ENCODE measurements at regions of chr3 and their contacts with region 1.

Region 1: DNA sequence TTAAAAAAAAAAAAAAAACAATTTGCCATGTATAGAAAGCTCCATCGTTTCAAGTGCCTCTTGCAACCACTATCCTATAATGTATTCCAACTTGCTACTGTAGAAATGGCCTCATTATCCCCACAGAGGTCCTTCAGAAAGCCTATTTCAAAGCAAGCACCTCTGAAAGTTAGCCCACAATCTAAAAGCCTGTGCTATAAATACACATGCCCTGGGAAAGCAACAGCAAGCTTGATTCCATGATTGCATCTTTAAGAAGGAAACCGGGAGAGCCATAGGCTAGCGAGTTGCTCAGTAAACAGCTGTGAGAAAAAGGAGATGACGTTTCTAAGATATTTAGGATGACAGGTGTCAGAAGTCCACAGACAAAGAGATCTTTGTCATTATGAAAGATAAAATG is 28.3 kb downstream of the TAFA4 start:
- DNase-seq: no peak
- H3K4me3 ChIP-seq: no peak overlapping the region
- H3K27ac ChIP-seq: no peak overlapping the region
- H3K4me1 ChIP-seq: no peaks in the 10 kb centered on the region
- H3K27me3 ChIP-seq: peaks cover 0 to 23% (median 0%) of the 10 kb centered on the region in 4 donors
- CTCF ChIP-seq: no peak
- EP300 ChIP-seq: no peak
- POLR2A ChIP-seq: no peak

Region 2: GRCh38 chr3:66962664-66963063 is 1941.4 kb before region 1 on chr3:
- intact Hi-C with region 1: loop called (anchors 10 kb)
- DNase-seq: no peak
- H3K4me3 ChIP-seq: no peak overlapping the region
- H3K27ac ChIP-seq: no peak overlapping the region
- H3K4me1 ChIP-seq: no peaks in the 10 kb centered on the region
- H3K27me3 ChIP-seq: no peaks in the 10 kb centered on the region
- CTCF ChIP-seq: no peak
- EP300 ChIP-seq: no peak
- POLR2A ChIP-seq: no peak

Region 3: GRCh38 chr3:68479779-68480178 is 424.3 kb before region 1 on chr3:
- intact Hi-C with region 1: no loop called
- DNase-seq: no peak
- H3K4me3 ChIP-seq: no peak overlapping the region
- H3K27ac ChIP-seq: no peak overlapping the region
- H3K4me1 ChIP-seq: peaks cover 0 to 14% (median 4%) of the 10 kb centered on the region in 4 donors
- H3K27me3 ChIP-seq: no peaks in the 10 kb centered on the region
- CTCF ChIP-seq: no peak
- EP300 ChIP-seq: no peak
- POLR2A ChIP-seq: no peak

Region 4: DNA sequence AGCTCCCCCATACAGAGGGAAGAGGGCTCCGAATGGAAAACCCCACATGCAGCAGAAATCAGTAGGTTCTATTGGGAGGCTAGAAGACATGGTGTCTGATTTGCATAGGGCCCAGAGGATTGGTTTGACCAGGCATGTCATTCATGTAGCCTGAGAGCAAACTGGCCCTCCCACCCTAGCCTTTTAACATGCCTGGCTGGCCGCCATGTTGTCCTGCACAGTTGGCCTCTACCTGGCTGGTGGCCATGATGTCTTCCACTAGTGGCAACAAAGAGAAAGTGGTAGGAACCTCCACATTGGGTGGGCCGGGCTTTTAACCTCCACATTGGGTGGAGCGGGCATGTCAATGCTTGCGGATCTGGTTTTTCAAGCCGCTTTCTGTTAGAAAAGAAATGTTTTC is 283.9 kb before region 1 on chr3:
- intact Hi-C with region 1: no loop called
- DNase-seq: no peak
- H3K4me3 ChIP-seq: no peak overlapping the region
- H3K27ac ChIP-seq: no peak overlapping the region
- H3K4me1 ChIP-seq: no peaks in the 10 kb centered on the region
- H3K27me3 ChIP-seq: no peaks in the 10 kb centered on the region
- CTCF ChIP-seq: no peak
- EP300 ChIP-seq: no peak
- POLR2A ChIP-seq: no peak

Region 5: GRCh38 chr3:68809596-68809995 is 94.5 kb before region 1 on chr3:
- intact Hi-C with region 1: no loop called
- DNase-seq: no peak
- H3K4me3 ChIP-seq: no peak overlapping the region
- H3K27ac ChIP-seq: no peak overlapping the region
- H3K4me1 ChIP-seq: no peaks in the 10 kb centered on the region
- H3K27me3 ChIP-seq: no peaks in the 10 kb centered on the region
- CTCF ChIP-seq: no peak
- EP300 ChIP-seq: no peak
- POLR2A ChIP-seq: no peak